Left cardiac atrium (tissue), 4 donors: ENCODE measurements at regions of chr17 and their contacts with region 1.

Region 1: DNA sequence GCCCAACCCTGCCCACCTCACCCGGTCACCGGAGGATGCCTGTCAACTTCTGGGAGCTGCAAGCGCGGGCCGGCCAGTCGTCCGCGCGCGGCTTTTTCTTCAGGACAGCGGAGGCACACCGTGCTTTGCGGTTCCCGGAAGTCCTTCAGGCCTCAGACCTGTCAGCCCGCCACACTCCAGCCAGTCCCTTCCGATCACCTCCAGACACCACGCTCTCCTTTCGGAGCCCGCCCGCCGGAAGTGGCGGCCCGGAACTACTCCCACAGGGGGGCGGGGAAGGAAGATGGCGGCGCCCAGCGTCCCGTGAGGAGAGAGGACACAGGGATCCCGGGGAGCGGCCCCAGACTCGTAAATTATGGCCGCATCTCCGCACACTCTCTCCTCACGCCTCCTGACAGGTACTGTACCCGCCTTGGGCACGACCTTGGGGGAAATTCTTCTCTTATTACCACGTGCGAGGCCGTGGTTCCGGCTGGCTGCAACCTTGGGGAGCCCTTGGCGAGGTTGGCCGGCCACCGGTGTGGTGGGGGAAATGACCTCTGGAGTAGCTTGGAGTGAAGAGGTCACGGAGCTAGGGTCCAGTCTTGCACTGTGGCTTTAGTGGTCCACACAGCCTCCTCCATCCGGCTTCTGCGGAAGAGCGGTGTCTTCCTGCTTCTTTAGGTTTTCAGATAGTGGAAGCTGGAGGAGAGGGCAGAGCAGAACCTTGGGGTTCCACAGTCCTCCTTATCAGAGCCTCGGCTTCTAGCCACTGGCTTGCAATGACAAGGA is at the start of gene COX10:
- DNase-seq: peak; percentile 90
- ATAC-seq: peak; percentile 99 to 100
- total RNA-seq, gene COX10: 24.2 to 29.7 TPM

Region 2: GRCh38 chr17:14300575-14301278 is 231.3 kb after region 1 on chr17 and contains the start of gene HS3ST3B1:
- intact Hi-C with region 1: loop called in 1 of 2 experiments (anchors 5 kb)
- DNase-seq: peak; percentile 96
- ATAC-seq: peak; percentile 92 to 94
- total RNA-seq, gene HS3ST3B1: 0.82 to 1.3 TPM